ENCODE measurements at regions of chr7 and their contacts with region 1.

Region 1: GRCh38 chr7:140003913-140004382 is 58.8 kb downstream of the PARP12 start:
- DNase-seq: peak; percentile 21 to 41 (median 34)
- H3K4me3 ChIP-seq: no peak overlapping the region
- H3K4me3 Mint-ChIP-seq: no peak overlapping the region
- H3K27ac ChIP-seq: no peak overlapping the region
- H3K27ac Mint-ChIP-seq: peak overlapping the region in 3 of 7 donors; percentile 1 to 71 (median 32)
- H3K4me1 ChIP-seq: no peaks in the 10 kb centered on the region
- H3K4me1 Mint-ChIP-seq: peaks cover 4% of the 10 kb centered on the region
- H3K27me3 ChIP-seq: no peaks in the 10 kb centered on the region
- H3K27me3 Mint-ChIP-seq: peaks cover 0 to 3% (median 3%) of the 10 kb centered on the region in 3 donors
- CTCF ChIP-seq: peak; percentile 70

Region 2: GRCh38 chr7:139264220-139264619 is 739.7 kb before region 1 on chr7:
- intact Hi-C with region 1: no loop called
- DNase-seq: no peak
- H3K4me3 ChIP-seq: no peak overlapping the region
- H3K4me3 Mint-ChIP-seq: no peak overlapping the region
- H3K27ac ChIP-seq: no peak overlapping the region
- H3K27ac Mint-ChIP-seq: no peak overlapping the region
- H3K4me1 ChIP-seq: peaks cover 4% of the 10 kb centered on the region in 2 donors
- H3K4me1 Mint-ChIP-seq: peaks cover 2% of the 10 kb centered on the region
- H3K27me3 ChIP-seq: no peaks in the 10 kb centered on the region
- H3K27me3 Mint-ChIP-seq: peaks cover 0 to 1% (median 0%) of the 10 kb centered on the region in 3 donors
- CTCF ChIP-seq: no peak

Region 3: DNA sequence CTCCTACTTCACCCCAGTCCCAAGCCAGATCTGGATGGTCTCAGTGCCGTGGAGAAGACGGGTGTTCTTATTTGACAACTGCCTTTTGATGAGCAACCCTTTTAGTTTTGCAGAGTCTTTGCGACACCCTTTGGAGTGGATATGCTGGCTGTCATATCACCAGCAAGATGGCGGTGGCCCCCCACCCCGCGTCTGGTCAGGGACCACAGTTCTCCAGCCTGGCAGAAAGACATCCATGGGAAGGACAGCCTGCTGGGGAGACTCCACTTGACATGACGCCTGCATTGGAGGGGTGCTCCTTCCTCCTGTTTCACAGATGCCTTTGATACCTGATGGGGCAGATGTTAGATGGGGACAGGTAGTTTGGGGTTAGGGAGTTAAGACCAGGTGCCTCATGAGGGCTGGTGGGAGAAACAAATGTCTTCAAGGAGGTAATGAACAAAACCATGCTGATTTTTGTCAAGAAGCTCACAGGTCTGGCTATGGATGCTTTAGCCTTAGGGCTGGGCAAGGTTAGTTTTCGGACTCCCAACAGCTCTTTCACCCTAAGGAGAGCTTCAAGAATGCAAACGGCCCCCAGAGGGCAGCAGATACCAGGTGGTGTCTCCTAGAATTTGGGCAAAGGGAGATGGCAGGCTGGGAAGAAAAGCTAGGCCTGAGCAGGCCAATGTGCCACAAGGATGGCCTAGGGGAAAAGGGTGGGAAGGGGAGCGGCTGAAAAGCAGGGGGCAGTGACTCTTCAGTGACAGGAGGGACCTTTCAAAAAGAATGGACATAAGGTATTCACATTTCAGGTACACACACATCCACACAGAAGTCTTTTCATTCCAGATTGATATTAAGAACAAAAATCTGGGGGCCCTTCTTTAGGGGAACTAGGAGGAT is 385.2 kb before region 1 on chr7:
- intact Hi-C with region 1: loop called (anchors 5 kb)
- DNase-seq: peak; percentile 10 to 24 (median 22)
- H3K4me3 ChIP-seq: no peak overlapping the region
- H3K4me3 Mint-ChIP-seq: no peak overlapping the region
- H3K27ac ChIP-seq: no peak overlapping the region
- H3K27ac Mint-ChIP-seq: peak overlapping the region in 4 of 7 donors; percentile 21 to 58 (median 37)
- H3K4me1 ChIP-seq: no peaks in the 10 kb centered on the region
- H3K4me1 Mint-ChIP-seq: peaks cover under 1% of the 10 kb centered on the region
- H3K27me3 ChIP-seq: no peaks in the 10 kb centered on the region
- H3K27me3 Mint-ChIP-seq: no peaks in the 10 kb centered on the region
- CTCF ChIP-seq: peak; percentile 47

Region 4: GRCh38 chr7:139992353-139993044 is 11.4 kb before region 1 on chr7:
- intact Hi-C with region 1: no loop called
- DNase-seq: no peak
- H3K4me3 ChIP-seq: no peak overlapping the region
- H3K4me3 Mint-ChIP-seq: no peak overlapping the region
- H3K27ac ChIP-seq: peak overlapping the region in 1 of 2 donors; percentile 22
- H3K27ac Mint-ChIP-seq: peak overlapping the region in 5 of 7 donors; percentile 15 to 81 (median 46)
- H3K4me1 ChIP-seq: peaks cover 8 to 11% of the 10 kb centered on the region in 2 donors
- H3K4me1 Mint-ChIP-seq: peaks cover 21% of the 10 kb centered on the region
- H3K27me3 ChIP-seq: no peaks in the 10 kb centered on the region
- H3K27me3 Mint-ChIP-seq: peaks cover 0 to 3% (median 1%) of the 10 kb centered on the region in 3 donors
- CTCF ChIP-seq: no peak

Measured in CD14-positive monocyte (primary cell).